GM10248 (cell line): ENCODE measurements at regions of chr14 and their contacts with region 1.

Region 1: GRCh38 chr14:73728717-73729330 is 14.6 kb upstream of the PNMA1 start:
- DNase-seq: peak; percentile 85
- CTCF ChIP-seq: peak; percentile 70

Region 2: GRCh38 chr14:73365727-73366126 is 363.1 kb before region 1 on chr14:
- CTCF ChIA-PET with region 1: no interaction called
- POLR2A ChIA-PET with region 1: no interaction called
- DNase-seq: no peak
- CTCF ChIP-seq: no peak

Region 3: DNA sequence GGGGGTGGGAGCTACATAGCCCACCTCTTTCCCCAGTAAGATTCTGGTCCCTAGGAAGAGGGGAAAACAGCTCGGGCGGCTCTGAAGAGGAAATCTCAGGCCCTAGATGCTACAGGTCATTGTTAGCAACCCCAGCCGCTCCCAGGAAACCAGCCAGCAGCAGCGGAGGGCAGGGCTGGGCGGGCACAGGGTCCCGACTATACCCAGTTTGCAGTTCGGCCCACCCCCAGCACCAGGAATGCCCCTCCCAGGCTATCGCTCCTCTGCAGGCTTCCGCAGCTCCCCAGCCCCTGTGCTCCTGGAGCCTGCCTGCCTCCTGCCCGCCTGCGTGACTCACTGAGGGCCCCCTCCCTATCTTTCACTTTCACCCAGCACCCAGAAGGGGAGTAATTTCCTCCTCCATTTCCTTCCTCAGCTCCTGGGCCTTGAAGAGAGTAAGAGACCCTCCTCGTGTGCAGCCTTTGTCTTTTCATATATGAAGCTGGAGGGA is 12.6 kb after region 1 on chr14:
- CTCF ChIA-PET with region 1: interaction called, 128 read pairs
- POLR2A ChIA-PET with region 1: no interaction called
- DNase-seq: peak; percentile 75
- CTCF ChIP-seq: no peak

Region 4: GRCh38 chr14:73759714-73760597 is 31.1 kb after region 1 on chr14:
- CTCF ChIA-PET with region 1: interaction called, 30 read pairs
- POLR2A ChIA-PET with region 1: interaction called, 3 read pairs
- DNase-seq: peak; percentile 92
- CTCF ChIP-seq: no peak

Region 5: GRCh38 chr14:73795972-73796371 is 67.1 kb after region 1 on chr14:
- CTCF ChIA-PET with region 1: interaction called, 15 read pairs
- POLR2A ChIA-PET with region 1: interaction called, 5 read pairs
- DNase-seq: no peak
- CTCF ChIP-seq: no peak

Region 6: GRCh38 chr14:73851644-73852382 is 123.0 kb after region 1 on chr14 and contains the start of gene PTGR2:
- CTCF ChIA-PET with region 1: interaction called, 20 read pairs
- POLR2A ChIA-PET with region 1: no interaction called
- DNase-seq: peak; percentile 97
- CTCF ChIP-seq: no peak